WTC11 (cell line): ENCODE measurements at regions of chr4 and their contacts with region 1.

Region 1: DNA sequence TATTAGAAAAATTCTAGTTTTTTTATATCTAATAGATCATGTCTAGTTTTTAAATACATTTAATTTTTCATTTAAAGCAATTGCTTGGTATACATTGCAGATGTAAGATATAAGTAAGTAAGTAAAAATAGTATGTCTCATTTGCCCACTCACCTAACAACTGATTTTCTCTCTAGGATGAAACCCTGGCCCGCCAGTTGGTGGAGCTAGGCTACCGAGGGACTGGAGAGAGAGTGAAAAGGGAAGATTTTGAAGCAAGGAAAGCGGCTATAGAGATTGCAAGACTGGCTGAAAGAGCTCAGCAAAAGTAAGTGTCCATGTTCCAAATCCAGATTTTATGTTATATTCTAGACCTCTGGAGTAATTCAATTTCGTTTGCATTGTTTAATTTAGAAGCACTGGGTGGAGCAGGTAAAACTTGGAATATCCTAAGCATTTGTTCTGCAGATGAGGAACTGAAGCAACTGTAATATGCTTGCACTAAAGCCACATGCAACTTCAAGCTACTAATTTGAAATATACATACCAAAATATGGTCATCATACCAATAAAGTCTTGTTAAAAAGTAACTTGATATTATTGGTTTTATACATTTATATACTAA is 27.1 kb downstream of the CFAP299 start:
- DNase-seq: peak; percentile 68
- ATAC-seq: peak; percentile 77
- H3K4me3 Mint-ChIP-seq: no peak overlapping the region
- H3K27ac Mint-ChIP-seq: no peak overlapping the region
- H3K4me1 Mint-ChIP-seq: peaks cover 21% of the 10 kb centered on the region
- H3K27me3 Mint-ChIP-seq: no peaks in the 10 kb centered on the region; the same call in 1 of the 2 replicates
- CTCF ChIP-seq: peak; percentile 29; the same call in 1 of the 2 replicates

Region 2: GRCh38 chr4:80295336-80295735 is 67.3 kb before region 1 on chr4:
- CTCF ChIA-PET with region 1: no interaction called
- POLR2A ChIA-PET with region 1: no interaction called
- DNase-seq: no peak
- ATAC-seq: no peak
- H3K4me3 Mint-ChIP-seq: no peak overlapping the region
- H3K27ac Mint-ChIP-seq: no peak overlapping the region
- H3K4me1 Mint-ChIP-seq: no peaks in the 10 kb centered on the region
- H3K27me3 Mint-ChIP-seq: no peaks in the 10 kb centered on the region
- CTCF ChIP-seq: no peak

Region 3: DNA sequence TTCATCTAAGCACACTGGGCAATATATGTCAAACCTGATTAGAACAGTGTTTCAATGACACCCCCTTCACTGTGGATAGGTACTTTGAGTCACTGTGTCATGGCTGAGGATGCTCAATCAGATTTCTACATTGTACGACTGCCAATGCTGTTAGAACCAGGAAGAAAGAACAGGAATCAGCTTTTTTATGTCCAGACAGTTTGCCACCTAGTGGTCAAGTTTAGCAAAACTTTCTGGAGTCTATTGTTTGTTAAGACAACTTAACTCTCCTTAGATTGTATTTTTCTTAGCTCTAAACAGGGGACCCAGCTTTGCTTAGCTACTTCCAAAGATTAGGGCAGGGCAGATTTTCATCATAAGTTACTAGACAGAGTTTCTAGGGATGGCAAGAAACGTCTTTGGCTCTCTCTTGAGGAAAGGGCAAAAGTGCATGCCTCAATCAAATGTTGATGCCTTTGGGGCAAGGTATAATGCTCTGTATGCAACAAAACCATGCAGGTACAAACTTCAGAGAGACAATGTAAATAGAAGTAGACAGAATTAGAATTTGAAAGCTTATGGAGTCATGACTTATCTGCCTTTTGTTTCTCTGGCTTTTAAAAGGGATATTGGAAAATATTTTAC is 627.4 kb after region 1 on chr4:
- CTCF ChIA-PET with region 1: interaction called, 27 read pairs
- POLR2A ChIA-PET with region 1: no interaction called
- DNase-seq: no peak
- ATAC-seq: peak; percentile 59
- H3K4me3 Mint-ChIP-seq: no peak overlapping the region
- H3K27ac Mint-ChIP-seq: no peak overlapping the region
- H3K4me1 Mint-ChIP-seq: peaks cover 11% of the 10 kb centered on the region
- H3K27me3 Mint-ChIP-seq: no peaks in the 10 kb centered on the region
- CTCF ChIP-seq: peak; percentile 38; the same call in 1 of the 2 replicates

Region 4: GRCh38 chr4:81030061-81030980 is 667.6 kb after region 1 on chr4 and contains the start of gene BMP3:
- CTCF ChIA-PET with region 1: interaction called, 33 read pairs
- POLR2A ChIA-PET with region 1: interaction called, 3 read pairs
- DNase-seq: peak; percentile 36
- ATAC-seq: peak; percentile 85
- H3K4me3 Mint-ChIP-seq: peak within 1 kb of the TSS; percentile 97
- H3K27ac Mint-ChIP-seq: no peak within 1 kb of the TSS
- H3K4me1 Mint-ChIP-seq: peaks cover 35% of the 10 kb centered on the region
- H3K27me3 Mint-ChIP-seq: peaks cover 67% of the 10 kb centered on the region
- CTCF ChIP-seq: no peak
- total RNA-seq, gene BMP3: 0.53 to 0.55 TPM (median 0.55 TPM) in 3 replicates

Region 5: DNA sequence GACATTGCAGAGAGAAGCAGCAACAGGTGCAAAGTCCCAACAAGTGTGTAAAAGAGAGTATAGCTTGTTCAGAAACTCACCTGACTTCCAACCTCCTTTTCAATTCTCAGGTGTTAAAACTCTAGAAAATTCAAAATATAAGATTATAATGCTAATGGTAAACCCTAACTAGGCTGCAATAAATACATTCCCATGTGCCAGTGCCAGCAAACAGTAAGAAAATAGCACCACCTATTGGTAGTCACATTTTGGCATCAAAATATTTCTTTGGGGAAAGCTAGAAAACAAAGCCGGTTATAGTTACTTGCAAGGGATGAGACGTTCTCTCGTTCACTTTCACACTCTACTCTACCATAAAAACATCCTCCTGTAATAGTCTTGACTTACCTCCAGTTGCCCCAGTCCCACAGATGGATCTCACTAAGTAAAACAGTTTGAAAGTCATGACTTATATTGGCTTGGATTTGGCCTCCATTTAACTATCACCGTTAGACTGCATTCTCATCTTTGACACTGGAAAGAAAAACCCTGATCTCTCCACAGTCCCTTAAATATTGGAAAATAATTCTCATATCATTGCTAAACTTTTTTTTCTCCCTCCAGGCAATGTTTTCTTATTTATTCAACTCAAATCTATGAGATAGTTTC is 677.5 kb after region 1 on chr4:
- CTCF ChIA-PET with region 1: interaction called, 39 read pairs
- POLR2A ChIA-PET with region 1: no interaction called
- DNase-seq: no peak
- ATAC-seq: peak; percentile 51; the same call in 1 of the 2 replicates
- H3K4me3 Mint-ChIP-seq: no peak overlapping the region
- H3K27ac Mint-ChIP-seq: no peak overlapping the region
- H3K4me1 Mint-ChIP-seq: peaks cover 16% of the 10 kb centered on the region
- H3K27me3 Mint-ChIP-seq: no peaks in the 10 kb centered on the region
- CTCF ChIP-seq: peak; percentile 19; the same call in 1 of the 2 replicates

Region 6: DNA sequence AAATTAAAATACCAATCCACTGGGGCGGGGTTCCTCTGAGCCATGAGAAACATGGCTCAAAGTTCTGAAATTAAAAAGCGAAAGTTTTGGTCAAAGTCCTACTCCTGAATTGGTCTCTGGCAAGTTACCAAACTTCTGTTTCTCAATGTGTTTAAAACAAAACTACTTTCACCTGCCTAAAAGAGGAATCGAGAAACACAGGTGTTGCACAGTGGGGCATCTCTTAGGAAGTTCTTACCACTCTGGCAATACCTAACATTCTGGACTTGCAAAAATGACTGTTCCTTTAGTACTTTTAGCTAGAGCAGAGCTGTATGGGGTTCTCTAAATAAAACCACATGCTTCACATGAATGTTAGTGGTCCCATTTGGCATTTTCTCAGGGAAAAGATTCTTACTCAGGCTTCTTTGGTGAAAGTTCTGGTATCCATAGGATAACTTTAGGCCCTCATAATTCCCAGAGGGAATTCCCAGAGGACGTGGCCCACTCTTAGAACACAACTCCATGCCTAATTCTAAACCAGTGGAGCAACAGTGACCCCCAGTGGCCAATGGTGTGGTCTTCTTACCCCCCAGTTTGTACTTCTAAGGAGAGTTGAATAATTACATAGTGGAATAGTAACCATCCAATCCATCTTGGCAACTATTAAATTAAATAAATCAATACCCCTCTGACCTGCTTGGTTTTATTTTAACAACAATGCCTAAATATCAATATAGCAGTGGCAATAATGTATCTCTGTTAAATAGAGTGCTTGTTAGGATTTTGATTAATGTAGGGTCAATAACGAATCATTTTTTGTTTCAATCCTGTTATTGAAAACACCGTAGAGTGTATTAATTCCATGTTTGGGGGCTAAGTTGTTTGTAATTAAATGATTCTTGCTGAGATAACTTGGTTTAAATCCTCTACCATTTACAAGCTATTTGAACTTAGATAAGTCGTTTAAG is 689.7 kb after region 1 on chr4:
- CTCF ChIA-PET with region 1: interaction called, 25 read pairs
- POLR2A ChIA-PET with region 1: no interaction called
- DNase-seq: peak; percentile 84
- ATAC-seq: peak; percentile 98
- H3K4me3 Mint-ChIP-seq: no peak overlapping the region
- H3K27ac Mint-ChIP-seq: peak overlapping the region; percentile 32; the same call in 1 of the 2 replicates
- H3K4me1 Mint-ChIP-seq: peaks cover 10% of the 10 kb centered on the region
- H3K27me3 Mint-ChIP-seq: no peaks in the 10 kb centered on the region
- CTCF ChIP-seq: peak; percentile 79